GM12878 (cell line): ENCODE measurements at regions of chr16 and their contacts with region 1.

Region 1: DNA sequence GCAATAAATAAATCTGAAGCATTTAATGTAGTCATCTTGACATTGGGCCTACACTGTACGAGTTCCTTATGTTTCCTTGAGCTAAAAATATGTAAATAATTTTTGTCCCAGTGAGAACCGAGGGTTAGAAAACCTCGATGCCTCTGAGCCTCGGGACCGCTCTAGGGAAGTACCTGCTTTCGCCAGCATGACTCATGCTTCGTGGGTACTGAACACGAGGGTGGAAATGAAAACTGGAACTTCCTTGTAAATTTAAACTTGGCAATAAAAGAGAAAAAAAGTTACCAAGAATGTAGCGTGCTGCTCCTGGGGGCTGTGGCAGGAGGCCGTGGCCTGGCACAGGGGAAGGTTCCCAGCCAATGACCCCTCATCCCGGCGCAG is 74.1 kb downstream of the SOCS1 start:
- DNase-seq: peak; percentile 64
- ATAC-seq: peak; percentile 37
- H3K4me3 ChIP-seq: no peak overlapping the region
- H3K27ac ChIP-seq: peak overlapping the region; percentile 81
- H3K4me1 ChIP-seq: peaks cover 47% of the 10 kb centered on the region
- H3K27me3 ChIP-seq: no peaks in the 10 kb centered on the region
- CTCF ChIP-seq: no peak
- EP300 ChIP-seq: peak in 1 of 2 experiments; percentile 70; a peak in 1 of 4 replicates
- POLR2A ChIP-seq: peak; percentile 15; the same call in 1 of the 2 replicates
- RAD21 ChIP-seq: no peak

Region 2: DNA sequence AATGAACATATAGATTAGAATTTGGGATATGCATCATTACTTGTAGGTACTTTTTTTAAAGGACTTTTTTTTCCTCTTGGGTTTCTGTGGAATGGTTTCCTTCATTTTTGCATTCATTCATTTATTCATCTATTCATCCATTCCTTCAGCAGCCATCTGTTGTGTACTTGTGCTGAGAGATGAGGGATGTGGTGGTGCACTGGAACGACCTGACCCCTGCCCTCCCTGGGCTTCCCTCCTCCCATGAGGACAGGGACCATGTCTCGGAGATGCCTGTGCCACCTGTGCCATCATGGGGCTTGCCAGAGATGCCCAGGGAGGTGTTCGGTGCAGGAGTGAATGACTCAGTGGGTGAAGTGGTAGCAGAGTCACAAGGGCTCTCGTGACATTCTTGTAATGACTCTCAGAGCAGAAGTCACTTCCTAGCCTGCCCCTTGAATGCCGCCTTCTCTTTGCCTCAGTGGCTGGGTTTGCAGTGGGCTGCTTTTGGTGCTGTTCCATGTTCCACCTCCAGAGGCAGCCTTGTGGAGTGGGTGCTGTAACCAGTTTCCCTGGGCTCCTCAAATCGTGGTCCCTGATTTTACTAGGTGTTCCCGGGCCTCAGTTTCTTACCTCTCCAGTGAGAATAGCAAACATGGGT is 193.6 kb before region 1 on chr16:
- CTCF ChIA-PET with region 1: no interaction called
- POLR2A ChIA-PET with region 1: no interaction called
- RAD21 ChIA-PET with region 1: interaction called, 6 read pairs
- SMC1A ChIA-PET with region 1: interaction called, 14 read pairs
- in situ Hi-C with region 1: no loop called
- intact Hi-C with region 1: loop called (anchors 5 kb)
- DNase-seq: no peak
- ATAC-seq: peak; percentile 83
- H3K4me3 ChIP-seq: no peak overlapping the region
- H3K27ac ChIP-seq: peak overlapping the region; percentile 60
- H3K4me1 ChIP-seq: peaks cover 38% of the 10 kb centered on the region
- H3K27me3 ChIP-seq: no peaks in the 10 kb centered on the region
- CTCF ChIP-seq: peak; percentile 58 to 70 (median 58)
- EP300 ChIP-seq: peak in 1 of 2 experiments; percentile 18; a peak in 1 of 4 replicates
- POLR2A ChIP-seq: no peak
- RAD21 ChIP-seq: peak; percentile 37

Region 3: DNA sequence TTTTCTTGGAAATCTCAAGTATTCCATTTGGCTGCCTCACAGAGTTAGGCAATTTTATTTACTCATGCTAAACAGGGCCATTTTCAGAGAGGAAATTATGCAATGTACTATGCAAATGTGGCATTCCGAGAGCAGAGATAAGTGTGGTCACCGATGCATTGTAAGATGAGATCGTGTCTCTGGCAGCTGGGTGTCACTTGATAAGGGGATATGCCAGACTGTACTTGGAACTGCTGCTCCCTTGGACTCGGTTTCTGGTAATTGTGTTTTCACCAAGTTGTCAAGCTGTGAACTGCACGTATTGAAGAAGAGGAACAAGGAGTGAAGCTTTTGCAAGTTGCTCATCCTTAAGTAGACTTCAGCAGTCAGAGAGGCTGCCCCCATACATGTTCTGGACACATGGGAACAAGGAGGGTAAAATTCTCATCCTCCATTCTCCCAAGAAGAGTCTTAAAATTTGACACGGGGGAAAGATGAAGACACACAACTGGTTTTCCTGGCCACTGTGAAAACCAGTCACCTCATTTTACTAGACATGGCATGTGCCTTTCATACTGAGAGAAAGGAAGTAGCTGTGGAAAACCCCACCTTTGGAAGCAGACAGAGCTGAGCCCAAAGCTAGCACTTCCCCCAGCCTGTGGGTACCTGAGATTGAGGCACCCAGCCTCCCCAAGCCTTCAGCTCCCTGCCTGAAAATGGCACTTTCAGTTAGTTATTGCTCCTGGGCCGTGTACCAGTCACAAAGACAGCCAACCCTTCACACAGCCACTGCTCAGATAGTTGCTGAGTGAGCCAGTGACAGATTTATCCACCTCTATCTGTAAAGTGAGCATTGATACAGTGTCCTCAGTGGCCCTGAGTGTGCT is 76.6 kb before region 1 on chr16:
- CTCF ChIA-PET with region 1: interaction called, 8 read pairs
- POLR2A ChIA-PET with region 1: interaction called, 5 read pairs
- RAD21 ChIA-PET with region 1: interaction called, 6 read pairs
- SMC1A ChIA-PET with region 1: interaction called, 16 read pairs
- in situ Hi-C with region 1: no loop called
- intact Hi-C with region 1: no loop called
- DNase-seq: peak; percentile 86
- ATAC-seq: peak; percentile 85
- H3K4me3 ChIP-seq: 0 out of 2 replicates have a peak overlapping the region, but pooled peaks have one; percentile 31
- H3K27ac ChIP-seq: peak overlapping the region; percentile 87
- H3K4me1 ChIP-seq: peaks cover 38% of the 10 kb centered on the region
- H3K27me3 ChIP-seq: no peaks in the 10 kb centered on the region
- CTCF ChIP-seq: no peak
- EP300 ChIP-seq: peak in 1 of 2 experiments; percentile 46; a peak in 1 of 4 replicates
- POLR2A ChIP-seq: peak; percentile 69
- RAD21 ChIP-seq: no peak

Region 4: DNA sequence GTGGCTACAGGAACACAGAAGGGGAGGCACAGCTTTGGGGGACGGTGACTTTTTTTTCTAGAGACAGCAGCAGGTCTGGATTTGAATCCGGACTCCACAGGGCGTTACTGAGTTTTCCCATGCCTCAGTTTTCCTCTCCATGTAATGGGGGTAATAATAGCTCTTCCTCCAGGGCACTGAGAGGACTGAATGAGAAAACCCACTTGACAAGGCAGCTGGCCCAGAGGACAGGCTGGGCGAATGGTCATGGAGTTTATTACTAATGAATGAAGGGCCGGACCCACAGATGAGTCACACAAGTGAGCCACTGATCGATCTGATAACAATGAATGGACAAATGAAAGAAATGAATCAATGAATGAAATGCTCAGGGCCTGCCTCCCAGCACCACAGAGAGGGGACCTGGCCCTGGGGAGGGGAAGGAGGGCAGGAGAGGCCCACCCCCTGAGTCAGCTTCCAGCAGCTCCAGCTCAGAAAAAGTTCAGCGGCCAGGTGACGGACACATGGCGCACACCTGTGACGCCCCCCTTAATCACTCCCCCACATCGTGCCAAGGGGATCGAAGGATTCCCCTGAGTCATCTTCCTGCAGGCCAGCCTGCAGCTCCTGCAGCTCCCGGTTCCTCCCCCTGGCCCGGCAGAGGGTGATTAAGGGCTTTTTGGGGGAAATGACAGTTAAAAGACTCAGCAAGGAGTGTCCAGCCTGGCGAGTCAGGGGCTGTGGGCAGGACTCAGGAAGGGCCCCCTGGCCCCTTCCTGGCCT is 19.8 kb after region 1 on chr16:
- CTCF ChIA-PET with region 1: interaction called, 4 read pairs
- POLR2A ChIA-PET with region 1: interaction called, 48 read pairs
- RAD21 ChIA-PET with region 1: interaction called, 86 read pairs
- SMC1A ChIA-PET with region 1: interaction called, 35 read pairs
- in situ Hi-C with region 1: no loop called
- intact Hi-C with region 1: loop called (anchors 1 kb)
- DNase-seq: no peak
- ATAC-seq: peak; percentile 5
- H3K4me3 ChIP-seq: no peak overlapping the region
- H3K27ac ChIP-seq: peak overlapping the region; percentile 45
- H3K4me1 ChIP-seq: peaks cover 67% of the 10 kb centered on the region
- H3K27me3 ChIP-seq: no peaks in the 10 kb centered on the region
- CTCF ChIP-seq: no peak
- EP300 ChIP-seq: peak in 1 of 2 experiments; percentile 28; a peak in 1 of 4 replicates
- POLR2A ChIP-seq: no peak
- RAD21 ChIP-seq: no peak

Region 5: GRCh38 chr16:11291091-11291703 is 109.3 kb after region 1 on chr16:
- CTCF ChIA-PET with region 1: no interaction called
- POLR2A ChIA-PET with region 1: no interaction called
- RAD21 ChIA-PET with region 1: no interaction called
- SMC1A ChIA-PET with region 1: no interaction called
- in situ Hi-C with region 1: no loop called
- intact Hi-C with region 1: no loop called
- DNase-seq: no peak
- ATAC-seq: no peak
- H3K4me3 ChIP-seq: no peak overlapping the region
- H3K27ac ChIP-seq: no peak overlapping the region
- H3K4me1 ChIP-seq: peaks cover 12% of the 10 kb centered on the region
- H3K27me3 ChIP-seq: no peaks in the 10 kb centered on the region
- CTCF ChIP-seq: no peak
- EP300 ChIP-seq: no peak
- POLR2A ChIP-seq: no peak
- RAD21 ChIP-seq: no peak